ENCODE measurements at regions of chr21 and their contacts with region 1.

Region 1: GRCh38 chr21:36319765-36320420 is at the start of gene MORC3:
- DNase-seq: peak; percentile 99
- ATAC-seq: peak; percentile 89
- H3K4me3 Mint-ChIP-seq: peak within 1 kb of the TSS; percentile 94
- H3K27ac Mint-ChIP-seq: peak within 1 kb of the TSS; percentile 98
- H3K4me1 Mint-ChIP-seq: peaks cover 34% of the 10 kb centered on the region
- H3K27me3 Mint-ChIP-seq: no peaks in the 10 kb centered on the region
- total RNA-seq, gene MORC3: 23.9 to 25.0 TPM

Region 2: GRCh38 chr21:36069713-36070573 is 249.9 kb before region 1 on chr21 and contains the start of gene CBR1:
- CTCF ChIA-PET with region 1: no interaction called
- POLR2A ChIA-PET with region 1: no interaction called
- intact Hi-C with region 1: loop called in 1 of 2 experiments (anchors 2 kb)
- DNase-seq: peak; percentile 94
- ATAC-seq: peak; percentile 98
- H3K4me3 Mint-ChIP-seq: peak within 1 kb of the TSS; percentile 83
- H3K27ac Mint-ChIP-seq: peak within 1 kb of the TSS; percentile 88
- H3K4me1 Mint-ChIP-seq: peaks cover 41% of the 10 kb centered on the region
- H3K27me3 Mint-ChIP-seq: no peaks in the 10 kb centered on the region
- total RNA-seq, gene CBR1: 48.6 to 54.1 TPM

Region 3: DNA sequence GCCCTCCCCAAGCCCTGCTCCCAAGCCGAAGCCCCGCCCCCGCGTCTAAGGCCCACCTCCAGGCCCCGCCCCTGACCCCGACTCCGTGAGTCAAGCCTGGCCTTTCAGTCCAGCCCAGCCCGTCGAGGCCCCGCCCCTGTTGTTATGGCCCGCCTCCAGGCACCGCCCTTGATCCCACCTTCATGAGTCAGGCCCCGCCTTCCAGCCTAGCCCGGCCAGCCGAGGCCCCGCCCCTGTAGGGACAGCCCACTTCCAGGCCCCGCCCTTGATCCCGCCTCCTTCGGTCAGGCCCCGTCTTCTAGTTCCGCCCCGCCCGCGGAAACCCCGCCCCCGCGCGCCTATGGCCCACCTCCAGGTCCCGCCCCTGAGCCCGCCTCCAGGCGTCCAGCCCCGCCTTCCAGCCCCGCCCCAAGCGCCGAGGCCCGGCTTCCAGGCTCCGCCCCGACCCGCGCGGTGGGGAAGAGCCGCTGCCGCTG is 163.5 kb before region 1 on chr21:
- CTCF ChIA-PET with region 1: interaction called, 7 read pairs
- POLR2A ChIA-PET with region 1: interaction called, 5 read pairs
- intact Hi-C with region 1: loop called (anchors 1 kb)
- DNase-seq: peak; percentile 100
- ATAC-seq: peak; percentile 93
- H3K4me3 Mint-ChIP-seq: peak overlapping the region; percentile 77
- H3K27ac Mint-ChIP-seq: no peak overlapping the region
- H3K4me1 Mint-ChIP-seq: peaks cover 23% of the 10 kb centered on the region
- H3K27me3 Mint-ChIP-seq: no peaks in the 10 kb centered on the region

Region 4: DNA sequence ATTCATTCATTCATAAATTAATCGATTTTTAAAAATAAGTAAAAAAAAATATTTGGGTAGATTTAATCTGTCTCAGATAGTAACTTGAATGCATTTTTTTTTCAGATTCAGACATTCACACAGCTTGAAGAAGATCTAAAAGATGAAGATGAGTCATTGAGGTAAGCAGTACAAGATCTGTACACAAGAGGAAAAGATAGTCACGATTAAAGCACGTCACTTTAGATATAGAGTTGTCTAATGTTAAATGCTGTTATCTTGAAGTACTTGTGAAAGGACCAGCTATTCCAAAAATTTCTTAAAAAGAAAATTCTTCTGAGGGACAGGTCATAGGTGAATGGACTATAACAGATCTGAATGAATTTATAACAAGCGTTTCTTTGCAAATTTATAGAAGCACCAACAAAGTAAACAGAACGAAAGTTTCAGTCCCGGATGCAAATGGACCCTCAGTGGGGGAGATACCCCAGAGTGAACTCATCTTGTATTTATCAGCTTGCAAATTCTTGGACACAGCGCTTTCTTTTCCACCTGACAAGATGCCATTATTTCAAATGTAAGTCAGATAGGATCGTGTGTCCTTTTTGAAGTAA is 31.1 kb before region 1 on chr21:
- CTCF ChIA-PET with region 1: interaction called, 31 read pairs
- POLR2A ChIA-PET with region 1: interaction called, 27 read pairs
- intact Hi-C with region 1: loop called (anchors 1 kb)
- DNase-seq: no peak
- ATAC-seq: peak; percentile 78
- H3K4me3 Mint-ChIP-seq: peak overlapping the region; percentile 57
- H3K27ac Mint-ChIP-seq: peak overlapping the region; percentile 95
- H3K4me1 Mint-ChIP-seq: peaks cover 22% of the 10 kb centered on the region
- H3K27me3 Mint-ChIP-seq: no peaks in the 10 kb centered on the region

Region 5: DNA sequence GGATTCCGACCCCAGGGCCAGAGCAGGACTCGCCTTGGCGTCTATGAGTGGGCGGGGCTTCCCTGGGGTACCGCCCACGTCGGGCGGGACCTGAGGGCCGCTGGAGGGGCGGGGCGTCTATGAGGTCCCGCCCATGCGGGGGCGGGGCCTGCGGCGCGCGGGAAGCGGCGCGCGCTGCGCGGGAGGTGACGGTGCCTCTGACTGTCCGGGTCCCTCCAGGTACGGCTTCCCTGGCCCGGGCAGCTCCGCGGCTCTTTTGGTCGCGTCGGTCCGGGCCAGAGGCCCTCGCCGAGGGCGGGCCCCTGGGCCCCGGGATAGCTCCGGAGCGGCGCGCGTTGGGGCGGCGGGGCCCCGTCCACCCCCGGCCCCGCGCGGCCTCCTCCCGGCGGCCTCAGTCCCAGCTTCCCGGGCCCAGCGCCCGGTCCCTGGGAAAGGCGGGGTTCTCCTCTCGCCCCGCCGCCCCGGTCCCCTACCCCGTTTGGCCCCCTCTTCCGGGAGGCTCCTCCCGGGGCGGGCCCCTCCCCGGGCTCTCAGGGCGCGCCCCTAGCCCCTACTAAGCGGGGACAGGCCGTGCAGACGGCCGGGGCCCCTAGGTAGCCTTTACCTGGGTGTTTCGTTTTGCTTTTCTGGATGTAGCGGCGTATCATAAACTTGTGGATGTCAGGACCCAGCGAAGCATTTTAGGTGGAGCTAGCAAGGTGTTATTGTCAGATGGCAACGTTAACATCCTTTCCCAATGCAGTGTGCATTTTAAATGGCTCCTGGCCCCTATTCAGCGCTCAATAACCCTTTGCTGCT is 65.5 kb after region 1 on chr21 and contains the start of gene CHAF1B:
- CTCF ChIA-PET with region 1: no interaction called
- POLR2A ChIA-PET with region 1: no interaction called
- intact Hi-C with region 1: loop called in 1 of 2 experiments (anchors 1 kb)
- DNase-seq: peak; percentile 91
- ATAC-seq: peak; percentile 96
- H3K4me3 Mint-ChIP-seq: peak within 1 kb of the TSS; percentile 81
- H3K27ac Mint-ChIP-seq: peak within 1 kb of the TSS; percentile 83
- H3K4me1 Mint-ChIP-seq: peaks cover 17% of the 10 kb centered on the region
- H3K27me3 Mint-ChIP-seq: no peaks in the 10 kb centered on the region
- total RNA-seq, gene CHAF1B: 33.2 to 36.3 TPM

Region 6: GRCh38 chr21:36966066-36966820 is 646.4 kb after region 1 on chr21 and contains the start of gene HLCS:
- CTCF ChIA-PET with region 1: no interaction called
- POLR2A ChIA-PET with region 1: interaction called, 4 read pairs
- intact Hi-C with region 1: loop called in 1 of 2 experiments (anchors 1 kb)
- DNase-seq: peak; percentile 84
- ATAC-seq: peak; percentile 90
- H3K4me3 Mint-ChIP-seq: peak within 1 kb of the TSS; percentile 73
- H3K27ac Mint-ChIP-seq: peak within 1 kb of the TSS; percentile 88
- H3K4me1 Mint-ChIP-seq: peaks cover 9% of the 10 kb centered on the region
- H3K27me3 Mint-ChIP-seq: no peaks in the 10 kb centered on the region
- total RNA-seq, gene HLCS: 14.3 to 15.0 TPM

Region 7: GRCh38 chr21:37267269-37268184 is 947.6 kb after region 1 on chr21 and contains the start of gene VPS26C:
- CTCF ChIA-PET with region 1: no interaction called
- POLR2A ChIA-PET with region 1: no interaction called
- intact Hi-C with region 1: loop called in 1 of 2 experiments (anchors 1 kb)
- DNase-seq: peak; percentile 99
- ATAC-seq: peak; percentile 92
- H3K4me3 Mint-ChIP-seq: peak within 1 kb of the TSS; percentile 84
- H3K27ac Mint-ChIP-seq: peak within 1 kb of the TSS; percentile 99
- H3K4me1 Mint-ChIP-seq: peaks cover 28% of the 10 kb centered on the region
- H3K27me3 Mint-ChIP-seq: no peaks in the 10 kb centered on the region
- total RNA-seq, gene VPS26C: 54.8 to 61.7 TPM

Measured in activated CD4-positive, alpha-beta T cell treated with anti-CD3 and anti-CD28 coated beads for 36 hours (primary cell).